IMR-90 (cell line): ENCODE measurements at regions of chr9 and their contacts with region 1.

Region 1: DNA sequence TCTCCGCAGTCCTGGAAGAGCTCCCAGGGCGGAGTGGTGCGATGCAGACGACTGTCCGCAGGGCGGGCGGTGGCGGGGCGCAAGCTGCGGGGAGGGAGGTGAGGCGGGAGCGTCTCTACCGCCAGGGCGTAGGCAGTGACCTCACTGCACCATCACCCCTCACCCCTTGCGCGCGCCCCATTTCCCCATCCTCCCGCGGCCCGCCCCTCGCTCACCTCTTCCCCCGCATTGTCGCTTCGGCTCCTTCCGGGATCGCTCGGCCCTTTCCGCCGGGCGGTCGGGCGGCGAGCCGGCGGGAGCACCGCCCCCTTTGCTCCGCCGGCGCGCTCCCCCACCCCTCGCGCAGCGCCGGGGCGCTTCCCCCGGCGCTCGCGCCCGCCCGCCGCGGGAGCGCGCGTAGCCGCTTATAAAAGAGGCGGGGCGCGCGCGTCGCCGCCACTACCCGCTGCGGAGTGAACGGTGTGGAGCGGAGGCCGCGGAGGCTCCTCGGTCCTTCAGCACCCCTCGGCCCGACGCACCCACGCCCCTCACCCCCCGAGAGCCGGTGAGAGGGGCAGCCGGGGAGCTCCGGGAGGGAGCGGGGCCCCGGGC is at the start of gene SPTAN1:
- DNase-seq: peak; percentile 84
- ATAC-seq: peak; percentile 86
- H3K4me3 ChIP-seq: peak within 1 kb of the TSS; percentile 99
- H3K27ac ChIP-seq: peak within 1 kb of the TSS; percentile 77
- H3K4me1 ChIP-seq: peaks cover 13% of the 10 kb centered on the region
- H3K27me3 ChIP-seq: no peaks in the 10 kb centered on the region
- CTCF ChIP-seq: no peak
- POLR2A ChIP-seq: peak; percentile 100
- RAD21 ChIP-seq: no peak
- total RNA-seq, gene SPTAN1: 327 and 345 TPM in 2 replicates

Region 2: DNA sequence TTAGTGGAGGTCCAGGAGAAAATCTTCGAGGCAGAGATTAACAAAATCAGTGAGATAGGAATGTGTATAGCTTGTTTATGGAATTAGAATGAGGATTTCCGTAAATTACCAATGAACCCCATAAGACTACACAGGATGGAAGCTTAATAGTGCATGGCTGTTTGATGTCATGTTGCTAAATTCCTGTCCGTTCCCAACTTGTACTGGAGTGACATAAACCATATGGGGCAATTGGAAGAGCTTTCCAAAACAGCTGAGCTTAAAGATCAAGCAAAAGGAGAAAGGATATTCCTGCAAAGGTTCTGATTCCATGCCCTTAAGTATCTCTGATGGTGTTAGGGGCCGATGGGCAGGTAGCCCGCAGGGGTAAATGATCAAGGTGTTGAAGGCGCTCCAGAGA is 30.3 kb before region 1 on chr9:
- CTCF ChIA-PET with region 1: no interaction called
- POLR2A ChIA-PET with region 1: interaction called, 11 read pairs
- dilution Hi-C with region 1: no loop called
- in situ Hi-C with region 1: no loop called
- intact Hi-C with region 1: no loop called
- DNase-seq: no peak
- ATAC-seq: no peak
- H3K4me3 ChIP-seq: no peak overlapping the region
- H3K27ac ChIP-seq: no peak overlapping the region
- H3K4me1 ChIP-seq: peaks cover 7% of the 10 kb centered on the region; the same call in 1 of the 2 replicates
- H3K27me3 ChIP-seq: no peaks in the 10 kb centered on the region
- CTCF ChIP-seq: no peak
- POLR2A ChIP-seq: no peak
- RAD21 ChIP-seq: no peak